ENCODE measurements at regions of chr19 and their contacts with region 1.

Region 1: GRCh38 chr19:9857920-9858746 is 23.0 kb downstream of the PIN1 start:
- DNase-seq: peak in 9 of 14 experiments; percentile 7 to 76 (median 24)
- ATAC-seq: peak; percentile 75
- H3K4me3 ChIP-seq: peak overlapping the region; percentile 57
- H3K4me3 Mint-ChIP-seq: peak overlapping the region; percentile 87
- H3K27ac ChIP-seq: peak overlapping the region; percentile 54 to 84
- H3K27ac Mint-ChIP-seq: peak overlapping the region; percentile 83
- H3K4me1 ChIP-seq: peaks cover 88% of the 10 kb centered on the region
- H3K4me1 Mint-ChIP-seq: peaks cover 86% of the 10 kb centered on the region
- H3K27me3 ChIP-seq: no peaks in the 10 kb centered on the region
- H3K27me3 Mint-ChIP-seq: no peaks in the 10 kb centered on the region
- CTCF ChIP-seq: no peak

Region 2: DNA sequence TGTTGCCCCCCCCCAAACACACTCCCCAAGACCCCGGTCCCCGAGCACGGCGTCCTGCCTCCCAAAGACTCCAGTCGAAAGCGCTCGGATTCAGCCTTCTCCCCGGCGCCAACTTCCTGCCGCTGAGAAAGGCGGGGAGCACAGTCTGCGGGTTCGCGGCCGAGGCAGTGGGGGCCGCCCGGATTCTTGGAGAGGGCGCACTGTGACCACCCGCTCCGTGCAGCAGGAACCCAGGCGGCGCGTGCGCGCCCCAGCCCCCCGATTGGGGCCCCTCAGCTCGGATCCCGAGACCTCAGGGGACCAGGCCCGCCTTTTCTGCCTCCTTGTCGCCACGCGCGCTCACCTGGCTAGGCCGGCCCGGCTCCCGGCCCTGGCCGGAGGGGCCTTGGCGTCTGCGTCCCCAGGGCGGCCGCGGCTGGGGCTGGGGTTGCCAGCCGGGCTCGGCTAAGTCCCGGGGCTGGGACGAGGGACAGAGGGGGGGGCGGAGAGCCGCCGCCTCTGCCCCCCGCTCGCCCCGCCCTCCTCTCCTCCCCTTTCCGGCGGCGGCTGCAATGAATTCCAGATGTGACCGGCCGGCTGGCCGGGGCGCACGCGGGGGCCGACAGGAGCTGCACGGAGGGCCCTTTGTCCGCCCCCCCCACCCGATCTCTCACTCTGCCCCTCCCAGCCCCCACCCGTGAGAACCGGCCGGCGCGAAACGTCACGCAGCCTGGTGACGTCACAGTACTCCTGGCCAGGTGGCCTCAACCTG is 372.9 kb after region 1 on chr19 and contains the start of gene S1PR2:
- CTCF ChIA-PET with region 1: no interaction called
- POLR2A ChIA-PET with region 1: no interaction called
- intact Hi-C with region 1: loop called in 1 of 2 experiments (anchors 10 kb)
- DNase-seq: peak; percentile 37 to 91 (median 68)
- ATAC-seq: peak; percentile 59
- H3K4me3 ChIP-seq: peak within 1 kb of the TSS; percentile 96
- H3K4me3 Mint-ChIP-seq: peak within 1 kb of the TSS; percentile 92
- H3K27ac ChIP-seq: peak within 1 kb of the TSS; percentile 86 to 90
- H3K27ac Mint-ChIP-seq: peak within 1 kb of the TSS; percentile 92
- H3K4me1 ChIP-seq: peaks cover 57% of the 10 kb centered on the region
- H3K4me1 Mint-ChIP-seq: peaks cover 29% of the 10 kb centered on the region
- H3K27me3 ChIP-seq: no peaks in the 10 kb centered on the region
- H3K27me3 Mint-ChIP-seq: no peaks in the 10 kb centered on the region
- CTCF ChIP-seq: no peak
- total RNA-seq, gene S1PR2: 14.6 to 17.2 TPM

Measured in CD4-positive, alpha-beta T cell (primary cell).